B cell (primary cell): ENCODE measurements at regions of chr3 and their contacts with region 1.

Region 1: DNA sequence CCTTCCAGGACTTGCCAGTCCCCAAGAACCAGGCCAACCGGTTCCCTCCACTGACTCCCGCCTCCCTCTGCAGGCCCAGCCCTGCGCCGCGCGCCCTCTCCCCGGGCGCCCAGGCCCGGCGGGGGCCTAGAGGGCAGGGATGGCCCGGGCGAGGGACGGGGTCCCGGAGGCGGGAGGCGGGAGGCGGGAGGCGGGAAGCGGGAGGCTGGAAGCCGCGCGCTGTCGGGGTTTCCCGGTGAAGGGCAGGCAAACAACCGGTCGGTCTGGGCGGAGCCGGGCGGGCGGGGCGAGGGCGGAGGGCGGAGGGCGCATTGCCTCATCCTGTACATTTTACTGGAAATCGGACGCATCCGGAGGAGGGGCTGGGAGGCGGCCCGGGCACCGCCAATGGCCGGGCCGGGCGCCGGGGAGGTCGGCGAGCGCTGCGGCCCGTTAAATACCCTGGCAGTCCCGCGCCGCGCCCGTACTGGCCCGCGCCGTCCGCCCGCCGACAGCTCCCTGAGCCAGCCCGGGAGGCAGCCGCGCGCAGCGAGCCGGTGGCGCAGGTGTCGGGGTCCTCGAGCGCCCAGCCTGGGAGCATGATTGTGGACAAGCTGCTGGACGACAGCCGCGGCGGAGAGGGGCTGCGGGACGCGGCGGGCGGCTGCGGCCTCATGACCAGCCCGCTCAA is at the start of gene NFKBIZ:
- DNase-seq: peak; percentile 92
- ATAC-seq: peak; percentile 82
- H3K4me3 ChIP-seq: peak within 1 kb of the TSS; percentile 87 to 100 (median 94)
- H3K4me3 Mint-ChIP-seq: peak within 1 kb of the TSS; percentile 99
- H3K27ac ChIP-seq: peak within 1 kb of the TSS; percentile 84 to 92
- H3K27ac Mint-ChIP-seq: peak within 1 kb of the TSS; percentile 96
- H3K4me1 ChIP-seq: peaks cover 18 to 36% of the 10 kb centered on the region in 2 donors
- H3K4me1 Mint-ChIP-seq: peaks cover 50% of the 10 kb centered on the region
- H3K27me3 ChIP-seq: no peaks in the 10 kb centered on the region
- H3K27me3 Mint-ChIP-seq: no peaks in the 10 kb centered on the region
- CTCF ChIP-seq: no peak
- total RNA-seq, gene NFKBIZ: 141 and 157 TPM in 2 replicates

Region 2: DNA sequence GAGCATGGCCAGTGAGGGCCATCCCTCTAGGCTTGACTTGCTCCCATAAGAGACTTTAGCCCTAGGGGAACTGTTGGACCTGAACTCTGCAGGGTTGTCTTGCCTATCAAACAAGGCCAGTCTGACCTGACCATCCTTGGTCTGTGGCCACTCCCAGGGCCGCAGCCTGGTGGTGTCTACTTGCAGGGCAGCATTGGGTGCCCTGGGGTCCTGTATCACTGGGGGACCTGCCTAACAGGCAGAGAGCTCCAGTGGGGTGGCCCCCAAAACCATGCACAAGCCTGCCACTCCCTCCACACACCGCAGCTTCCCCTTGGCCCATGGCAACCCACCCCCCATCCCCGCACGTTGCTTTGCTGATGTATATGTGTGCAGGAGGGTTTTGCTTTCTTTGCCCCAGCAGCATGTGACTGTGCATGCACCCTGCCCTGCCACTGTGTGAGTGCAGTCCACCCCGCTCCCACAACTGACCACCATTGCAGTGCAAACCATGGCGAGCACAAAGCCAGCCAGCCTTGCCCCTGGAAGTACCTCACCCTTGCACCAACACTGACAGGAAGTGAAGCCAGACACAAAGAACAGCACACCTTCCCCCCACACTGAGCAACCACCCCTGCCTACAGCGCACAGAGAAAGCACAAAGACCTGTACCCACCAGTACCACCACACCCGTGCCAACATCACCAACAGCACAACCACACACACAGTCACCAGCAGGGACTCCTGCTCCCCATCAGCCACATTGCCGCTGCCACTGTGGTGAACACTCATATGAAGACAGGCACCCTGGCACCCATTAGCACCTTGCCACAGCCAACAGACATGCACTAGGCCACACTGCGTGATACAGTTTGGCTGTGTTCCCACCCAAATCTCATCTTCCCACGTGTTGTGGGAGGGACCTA is 424.9 kb before region 1 on chr3:
- CTCF ChIA-PET with region 1: no interaction called
- POLR2A ChIA-PET with region 1: no interaction called
- intact Hi-C with region 1: no loop called
- DNase-seq: no peak
- ATAC-seq: no peak
- H3K4me3 ChIP-seq: no peak overlapping the region
- H3K4me3 Mint-ChIP-seq: no peak overlapping the region
- H3K27ac ChIP-seq: no peak overlapping the region
- H3K27ac Mint-ChIP-seq: no peak overlapping the region
- H3K4me1 ChIP-seq: peaks cover 0 to 4% of the 10 kb centered on the region in 2 donors
- H3K4me1 Mint-ChIP-seq: peaks cover 35% of the 10 kb centered on the region
- H3K27me3 ChIP-seq: no peaks in the 10 kb centered on the region
- H3K27me3 Mint-ChIP-seq: no peaks in the 10 kb centered on the region
- CTCF ChIP-seq: no peak

Region 3: GRCh38 chr3:101676765-101677435 is 172.3 kb before region 1 on chr3 and contains the start of gene ZBTB11:
- CTCF ChIA-PET with region 1: no interaction called
- POLR2A ChIA-PET with region 1: interaction called, 6 read pairs
- intact Hi-C with region 1: loop called (anchors 5 kb)
- DNase-seq: peak; percentile 99
- ATAC-seq: peak; percentile 65
- H3K4me3 ChIP-seq: peak within 1 kb of the TSS; percentile 73 to 99 (median 94)
- H3K4me3 Mint-ChIP-seq: peak within 1 kb of the TSS; percentile 94
- H3K27ac ChIP-seq: peak within 1 kb of the TSS; percentile 96 to 98
- H3K27ac Mint-ChIP-seq: peak within 1 kb of the TSS; percentile 97
- H3K4me1 ChIP-seq: peaks cover 17 to 21% of the 10 kb centered on the region in 2 donors
- H3K4me1 Mint-ChIP-seq: peaks cover 40% of the 10 kb centered on the region
- H3K27me3 ChIP-seq: no peaks in the 10 kb centered on the region
- H3K27me3 Mint-ChIP-seq: no peaks in the 10 kb centered on the region
- CTCF ChIP-seq: no peak
- total RNA-seq, gene ZBTB11: 40.7 and 42.6 TPM in 2 replicates

Region 4: GRCh38 chr3:101809178-101810021 is 39.8 kb before region 1 on chr3:
- CTCF ChIA-PET with region 1: interaction called, 25 read pairs
- POLR2A ChIA-PET with region 1: interaction called, 3 read pairs
- intact Hi-C with region 1: no loop called
- DNase-seq: peak; percentile 71
- ATAC-seq: peak; percentile 64
- H3K4me3 ChIP-seq: no peak overlapping the region
- H3K4me3 Mint-ChIP-seq: no peak overlapping the region
- H3K27ac ChIP-seq: no peak overlapping the region
- H3K27ac Mint-ChIP-seq: no peak overlapping the region
- H3K4me1 ChIP-seq: peaks cover 5 to 13% of the 10 kb centered on the region in 2 donors
- H3K4me1 Mint-ChIP-seq: peaks cover 20% of the 10 kb centered on the region
- H3K27me3 ChIP-seq: no peaks in the 10 kb centered on the region
- H3K27me3 Mint-ChIP-seq: no peaks in the 10 kb centered on the region
- CTCF ChIP-seq: peak; percentile 88

Region 5: GRCh38 chr3:101827211-101828174 is 21.7 kb before region 1 on chr3:
- CTCF ChIA-PET with region 1: interaction called, 14 read pairs
- POLR2A ChIA-PET with region 1: interaction called, 41 read pairs
- intact Hi-C with region 1: loop called (anchors 1 kb)
- DNase-seq: peak; percentile 93
- ATAC-seq: peak; percentile 90
- H3K4me3 ChIP-seq: peak overlapping the region; percentile 58 to 83 (median 62)
- H3K4me3 Mint-ChIP-seq: peak overlapping the region; percentile 90
- H3K27ac ChIP-seq: peak overlapping the region; percentile 93 to 97
- H3K27ac Mint-ChIP-seq: peak overlapping the region; percentile 96
- H3K4me1 ChIP-seq: peaks cover 44 to 45% of the 10 kb centered on the region in 2 donors
- H3K4me1 Mint-ChIP-seq: peaks cover 58% of the 10 kb centered on the region
- H3K27me3 ChIP-seq: no peaks in the 10 kb centered on the region
- H3K27me3 Mint-ChIP-seq: no peaks in the 10 kb centered on the region
- CTCF ChIP-seq: no peak

Region 6: DNA sequence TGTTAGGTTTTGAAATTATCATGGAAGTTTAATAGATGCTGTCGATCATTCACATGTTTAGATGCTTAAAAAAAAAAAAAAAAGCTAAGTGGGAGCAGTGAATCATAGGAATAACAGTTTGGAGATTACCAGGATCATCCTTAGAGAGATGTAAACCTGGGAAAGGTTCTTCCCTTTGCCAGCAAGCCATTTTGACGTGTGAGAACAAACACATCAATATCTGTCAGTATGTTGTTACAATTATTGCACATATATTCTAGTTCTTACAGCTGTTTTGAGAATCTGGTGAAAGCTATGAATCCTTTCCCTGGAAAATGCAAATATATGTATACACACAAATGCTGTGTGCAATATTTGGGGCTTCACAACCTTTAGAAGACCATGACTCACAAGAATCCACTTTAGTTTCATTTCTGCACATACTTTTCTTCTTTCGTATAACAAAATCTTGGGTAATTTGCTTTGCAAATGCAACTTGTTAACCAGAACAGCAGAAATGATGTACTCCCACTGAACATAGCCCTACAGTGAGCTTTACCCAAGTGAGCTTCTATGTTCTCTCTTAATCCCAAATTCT is 12.1 kb after region 1 on chr3:
- CTCF ChIA-PET with region 1: interaction called, 3 read pairs
- POLR2A ChIA-PET with region 1: interaction called, 5 read pairs
- intact Hi-C with region 1: loop called (anchors 1 kb)
- DNase-seq: no peak
- ATAC-seq: peak; percentile 45
- H3K4me3 ChIP-seq: no peak overlapping the region
- H3K4me3 Mint-ChIP-seq: peak overlapping the region; percentile 11
- H3K27ac ChIP-seq: peak overlapping the region in 1 of 2 donors; percentile 6
- H3K27ac Mint-ChIP-seq: peak overlapping the region; percentile 76
- H3K4me1 ChIP-seq: peaks cover 17 to 20% of the 10 kb centered on the region in 2 donors
- H3K4me1 Mint-ChIP-seq: peaks cover 48% of the 10 kb centered on the region
- H3K27me3 ChIP-seq: no peaks in the 10 kb centered on the region
- H3K27me3 Mint-ChIP-seq: no peaks in the 10 kb centered on the region
- CTCF ChIP-seq: no peak

Region 7: DNA sequence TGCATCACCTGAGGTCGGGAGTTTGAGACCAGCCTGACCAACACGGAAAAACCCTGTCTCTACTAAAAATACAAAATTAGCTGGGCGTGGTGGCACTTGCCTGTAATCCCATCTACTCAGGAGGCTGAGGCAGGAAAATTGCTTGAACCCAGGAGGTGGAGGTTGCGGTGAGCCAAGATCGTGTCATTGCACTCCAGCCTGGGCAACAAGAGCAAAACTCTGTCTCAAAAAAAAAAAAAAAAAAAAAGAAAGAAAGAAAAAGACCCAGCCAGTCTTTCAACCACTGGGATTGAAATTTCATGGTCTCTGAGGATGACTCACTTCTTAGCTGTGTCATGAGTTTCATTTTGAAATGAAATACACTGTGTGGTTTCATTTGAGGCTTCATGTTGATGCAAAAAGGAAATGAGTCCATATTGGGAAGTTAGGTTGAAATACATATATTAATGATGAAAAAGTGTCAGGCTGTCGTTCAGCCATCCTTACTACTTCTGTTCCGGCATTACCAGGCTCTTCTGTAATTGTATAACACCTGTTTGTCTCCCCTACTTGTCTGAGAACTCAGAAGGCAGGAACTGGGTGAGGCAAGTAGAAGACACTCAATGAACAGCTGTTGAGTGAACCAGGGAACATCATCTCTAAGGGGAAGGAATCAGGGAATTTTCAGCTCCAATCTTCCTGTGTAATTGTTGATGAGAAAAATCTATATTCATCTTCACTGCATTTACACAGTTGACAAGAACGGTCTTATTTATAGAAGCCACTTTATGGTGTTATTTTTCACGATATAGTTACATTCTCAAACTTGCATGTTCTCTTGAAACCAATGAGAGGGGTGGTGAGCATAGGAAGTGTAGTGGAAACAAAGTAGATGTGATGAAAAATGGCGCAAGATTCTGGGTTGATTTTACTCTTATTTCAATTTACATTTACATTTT is 87.5 kb after region 1 on chr3:
- CTCF ChIA-PET with region 1: interaction called, 4 read pairs
- POLR2A ChIA-PET with region 1: interaction called, 3 read pairs
- intact Hi-C with region 1: loop called (anchors 1 kb)
- DNase-seq: peak; percentile 82
- ATAC-seq: peak; percentile 86
- H3K4me3 ChIP-seq: peak overlapping the region in 2 of 5 experiments; percentile 24 to 32
- H3K4me3 Mint-ChIP-seq: peak overlapping the region; percentile 74
- H3K27ac ChIP-seq: peak overlapping the region; percentile 56
- H3K27ac Mint-ChIP-seq: peak overlapping the region; percentile 90
- H3K4me1 ChIP-seq: peaks cover 56 to 64% of the 10 kb centered on the region in 2 donors
- H3K4me1 Mint-ChIP-seq: peaks cover 33% of the 10 kb centered on the region
- H3K27me3 ChIP-seq: no peaks in the 10 kb centered on the region
- H3K27me3 Mint-ChIP-seq: no peaks in the 10 kb centered on the region
- CTCF ChIP-seq: no peak

Region 8: DNA sequence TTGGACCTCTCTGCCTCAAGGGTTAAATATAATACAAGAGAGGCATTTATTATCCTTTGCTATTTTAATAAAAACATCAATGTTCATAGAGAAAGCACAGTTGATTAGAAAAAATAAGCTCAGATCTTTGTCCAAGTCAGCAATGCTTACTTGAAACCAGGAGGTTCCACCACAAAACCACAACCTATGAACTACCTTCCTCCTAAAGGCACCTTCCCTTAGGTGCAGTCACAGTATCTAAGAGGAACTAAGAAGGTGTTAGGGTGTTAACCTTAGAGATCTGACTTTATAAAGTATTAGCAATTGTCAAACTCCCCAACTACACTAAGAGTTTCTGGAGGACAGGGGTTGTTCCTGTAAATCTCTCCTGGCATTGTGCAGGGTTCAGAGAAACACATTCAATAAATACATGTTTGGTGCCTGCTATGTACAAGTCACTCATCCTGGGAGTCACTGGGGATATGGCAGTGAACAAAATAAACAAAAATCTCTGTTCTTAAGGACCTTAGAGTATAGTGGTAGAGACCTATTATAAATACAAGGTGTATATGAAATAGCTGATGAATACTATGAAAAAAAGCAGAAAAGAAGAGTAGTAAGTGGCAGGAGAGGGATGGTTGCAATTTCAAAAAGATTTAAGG is 208.7 kb after region 1 on chr3:
- CTCF ChIA-PET with region 1: interaction called, 5 read pairs
- POLR2A ChIA-PET with region 1: interaction called, 7 read pairs
- intact Hi-C with region 1: loop called (anchors 5 kb)
- DNase-seq: peak; percentile 80
- ATAC-seq: peak; percentile 82
- H3K4me3 ChIP-seq: no peak overlapping the region
- H3K4me3 Mint-ChIP-seq: peak overlapping the region; percentile 57
- H3K27ac ChIP-seq: peak overlapping the region; percentile 9 to 39
- H3K27ac Mint-ChIP-seq: peak overlapping the region; percentile 43
- H3K4me1 ChIP-seq: peaks cover 38 to 39% of the 10 kb centered on the region in 2 donors
- H3K4me1 Mint-ChIP-seq: peaks cover 34% of the 10 kb centered on the region
- H3K27me3 ChIP-seq: no peaks in the 10 kb centered on the region
- H3K27me3 Mint-ChIP-seq: no peaks in the 10 kb centered on the region
- CTCF ChIP-seq: no peak